Pancreas (tissue), 10 donors: ENCODE measurements at regions of chr18 and their contacts with region 1.

Region 1: GRCh38 chr18:2920546-2921343 is 73.9 kb downstream of the EMILIN2 start:
- DNase-seq: no peak
- ATAC-seq: no peak
- H3K4me3 ChIP-seq: no peak overlapping the region
- H3K27ac ChIP-seq: no peak overlapping the region
- H3K4me1 ChIP-seq: peaks cover 0 to 6% (median 0%) of the 10 kb centered on the region in 3 donors
- H3K27me3 ChIP-seq: no peaks in the 10 kb centered on the region
- CTCF ChIP-seq: no peak

Region 2: DNA sequence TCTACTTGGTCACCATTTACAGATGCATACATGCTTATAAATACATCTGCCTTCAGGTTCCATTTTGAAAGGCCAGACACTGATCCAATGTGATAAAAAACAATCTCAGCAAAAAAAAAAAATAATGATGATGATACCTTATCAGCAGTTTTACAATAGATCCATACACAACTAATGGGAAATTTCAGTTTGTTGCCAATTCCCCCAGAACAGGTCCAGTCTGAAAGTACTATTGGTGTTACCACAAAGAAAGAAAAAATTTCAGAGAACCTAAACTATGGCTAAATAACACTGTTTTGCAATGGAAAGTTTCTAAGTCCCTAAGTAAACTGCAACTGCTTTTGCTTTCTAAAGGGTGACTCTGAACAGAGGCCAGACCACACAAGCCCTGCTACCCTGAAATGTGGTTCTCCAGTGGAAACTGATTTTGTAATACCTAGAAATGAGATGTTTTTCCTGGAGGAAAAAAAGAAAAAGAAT is 38.1 kb after region 1 on chr18:
- intact Hi-C with region 1: no loop called
- DNase-seq: no peak
- ATAC-seq: peak in 3 of 4 donors; percentile 53 to 60 (median 56)
- H3K4me3 ChIP-seq: no peak overlapping the region
- H3K27ac ChIP-seq: peak overlapping the region in 1 of 4 donors; percentile 9
- H3K4me1 ChIP-seq: peaks cover 0 to 15% (median 4%) of the 10 kb centered on the region in 3 donors
- H3K27me3 ChIP-seq: no peaks in the 10 kb centered on the region
- CTCF ChIP-seq: no peak

Region 3: GRCh38 chr18:3135536-3135935 is 214.8 kb after region 1 on chr18:
- intact Hi-C with region 1: loop called in 1 of 3 experiments (anchors 10 kb)
- DNase-seq: no peak
- ATAC-seq: no peak
- H3K4me3 ChIP-seq: no peak overlapping the region
- H3K27ac ChIP-seq: no peak overlapping the region
- H3K4me1 ChIP-seq: peaks cover under 1 to 7% (median 4%) of the 10 kb centered on the region in 3 donors
- H3K27me3 ChIP-seq: no peaks in the 10 kb centered on the region
- CTCF ChIP-seq: no peak

Region 4: DNA sequence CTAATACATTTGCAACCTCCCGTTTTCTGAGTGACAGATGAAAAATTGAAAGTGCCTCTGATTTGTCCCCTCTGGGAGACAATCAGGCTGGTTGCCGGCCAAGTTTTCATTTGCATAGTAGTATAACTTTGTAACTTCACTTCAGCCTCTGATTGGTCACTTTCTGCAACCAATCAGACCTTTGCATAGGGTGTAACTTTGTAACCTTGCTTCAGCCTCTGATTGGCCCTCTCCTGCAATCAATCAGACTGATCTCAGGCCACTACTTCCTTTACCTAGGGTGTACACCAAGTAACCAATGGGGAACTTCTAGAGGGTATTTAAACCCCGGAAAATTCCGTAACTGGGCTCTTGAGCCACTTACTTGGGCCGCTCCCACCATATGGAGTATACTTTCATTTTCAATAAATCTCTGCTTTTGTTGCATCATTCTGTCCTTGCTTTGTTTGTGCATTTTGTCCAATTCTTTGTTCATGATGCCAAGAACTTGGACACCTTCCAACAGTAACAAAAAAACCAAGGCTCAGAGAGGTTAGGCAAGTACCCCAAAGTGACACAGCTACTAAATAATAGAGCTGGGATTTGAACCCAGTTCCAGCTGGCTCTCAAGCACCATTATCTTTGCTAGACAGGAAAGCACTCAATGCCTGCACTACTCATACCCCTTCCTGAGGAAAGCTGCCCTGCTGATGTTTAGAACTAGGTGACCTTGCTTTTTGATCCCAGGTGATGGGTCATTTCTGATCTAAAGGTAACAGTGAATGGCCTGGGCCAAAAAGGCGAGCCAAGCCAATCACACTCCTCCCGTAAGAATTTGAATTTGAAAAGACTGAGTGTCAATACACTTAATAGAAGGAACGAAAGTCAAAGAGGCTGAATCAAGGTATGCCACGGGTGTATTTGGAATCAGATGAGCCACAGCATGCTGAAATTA is 309.9 kb after region 1 on chr18:
- intact Hi-C with region 1: no loop called
- DNase-seq: no peak
- ATAC-seq: peak; percentile 11 to 64 (median 26)
- H3K4me3 ChIP-seq: no peak overlapping the region
- H3K27ac ChIP-seq: no peak overlapping the region
- H3K4me1 ChIP-seq: peaks cover 10 to 24% (median 23%) of the 10 kb centered on the region in 3 donors
- H3K27me3 ChIP-seq: no peaks in the 10 kb centered on the region
- CTCF ChIP-seq: no peak

Region 5: GRCh38 chr18:3481696-3482210 is 561.0 kb after region 1 on chr18:
- intact Hi-C with region 1: no loop called
- DNase-seq: peak in 1 of 6 donors; percentile 19
- ATAC-seq: peak in 3 of 4 donors; percentile 66 to 74 (median 69)
- H3K4me3 ChIP-seq: no peak overlapping the region
- H3K27ac ChIP-seq: no peak overlapping the region
- H3K4me1 ChIP-seq: no peaks in the 10 kb centered on the region
- H3K27me3 ChIP-seq: no peaks in the 10 kb centered on the region
- CTCF ChIP-seq: peak in 2 of 4 donors; percentile 17 to 33